ENCODE measurements at regions of chr6 and their contacts with region 1.

Region 1: DNA sequence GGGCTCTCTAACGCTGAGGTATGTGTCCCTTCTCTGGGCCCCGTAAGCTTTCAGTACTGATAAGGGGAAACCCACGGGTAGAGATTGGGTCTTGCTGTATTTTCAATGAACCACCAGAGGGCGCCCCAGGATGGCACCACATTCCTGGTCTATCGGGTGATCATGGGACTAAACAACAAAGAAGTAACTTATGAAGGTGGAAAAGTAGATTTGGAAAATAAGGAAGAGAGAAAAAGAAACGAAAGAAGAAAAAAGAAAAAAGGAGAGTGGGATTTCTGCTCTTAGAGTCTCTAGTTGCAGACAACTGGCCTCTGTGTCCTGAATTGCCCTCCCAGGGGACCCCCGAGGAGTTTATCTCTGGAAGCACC is 93.8 kb downstream of the GMPR start:
- DNase-seq: peak; percentile 68
- ATAC-seq: peak; percentile 82

Region 2: GRCh38 chr6:16406966-16407365 is 74.8 kb after region 1 on chr6:
- intact Hi-C with region 1: loop called (anchors 2 kb)
- DNase-seq: no peak
- ATAC-seq: no peak

Region 3: DNA sequence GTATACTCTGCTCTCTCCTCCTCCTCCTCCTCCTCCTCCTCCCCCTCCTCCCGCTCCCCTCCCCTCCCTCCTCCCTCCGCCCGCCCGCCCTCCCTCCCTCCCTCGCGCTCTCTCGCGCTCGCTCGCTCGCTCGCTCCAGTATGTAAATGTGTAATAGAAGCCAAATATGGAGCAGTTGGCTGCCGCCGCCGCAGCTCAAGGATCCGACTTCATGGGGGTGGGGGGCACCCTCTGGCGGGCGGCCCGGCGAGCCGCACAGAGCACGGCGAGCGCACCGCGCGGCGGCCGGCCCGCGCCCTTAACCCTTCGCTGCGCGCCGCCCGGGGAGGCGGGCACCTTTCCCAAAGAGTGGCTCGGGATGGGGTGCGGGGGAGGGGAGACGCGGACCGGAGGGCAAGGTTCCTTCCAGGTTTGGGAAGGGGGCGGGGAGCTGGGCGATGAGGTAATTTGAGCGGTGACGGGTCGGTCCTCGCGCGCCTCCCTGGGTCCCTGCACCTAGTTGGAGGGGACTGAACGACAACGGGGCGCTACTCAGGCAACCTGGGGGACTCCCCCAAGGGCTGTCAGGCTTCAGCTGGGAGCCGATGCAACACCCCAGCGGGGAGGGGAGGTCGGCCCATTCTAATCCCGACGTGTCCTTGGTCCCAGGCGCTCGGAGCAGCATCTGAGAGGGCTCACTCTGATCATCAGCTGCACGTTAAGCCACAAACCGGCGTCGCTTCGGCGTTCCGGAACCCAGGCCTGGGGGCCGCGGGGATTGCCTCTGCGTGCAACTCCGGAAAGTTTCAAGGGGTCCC is 429.5 kb after region 1 on chr6:
- intact Hi-C with region 1: loop called (anchors 10 kb)
- DNase-seq: peak; percentile 93
- ATAC-seq: peak; percentile 65